PC-9 (cell line): ENCODE measurements at regions of chr7 and their contacts with region 1.

Region 1: DNA sequence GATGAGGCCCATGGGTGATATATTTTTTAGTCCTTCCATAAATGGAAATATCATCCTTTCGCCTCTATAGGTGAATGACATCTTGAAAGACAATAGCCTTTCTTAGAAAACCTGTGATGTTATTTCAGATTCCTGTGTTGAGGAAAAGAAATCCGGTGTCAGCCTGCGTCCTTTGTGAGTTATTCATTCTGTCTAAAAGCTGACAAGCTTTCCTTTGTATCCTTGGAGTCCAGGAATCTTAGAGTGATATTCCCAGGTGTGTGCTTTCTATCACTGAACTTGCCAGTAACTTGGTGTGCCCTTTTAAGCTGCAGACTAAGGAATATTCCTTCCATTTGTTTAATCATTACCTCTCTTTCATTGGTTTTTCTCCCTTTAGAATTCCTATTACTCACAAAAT is 41.0 kb downstream of the EVX1 start:
- DNase-seq: no peak
- H3K4me3 ChIP-seq: no peak overlapping the region
- H3K27ac ChIP-seq: no peak overlapping the region
- H3K4me1 ChIP-seq: no peaks in the 10 kb centered on the region
- H3K27me3 ChIP-seq: no peaks in the 10 kb centered on the region
- CTCF ChIP-seq: no peak

Region 2: GRCh38 chr7:27409776-27410175 is 126.2 kb after region 1 on chr7:
- CTCF ChIA-PET with region 1: interaction called, 17 read pairs
- POLR2A ChIA-PET with region 1: no interaction called
- intact Hi-C with region 1: no loop called
- DNase-seq: no peak
- H3K4me3 ChIP-seq: no peak overlapping the region
- H3K27ac ChIP-seq: no peak overlapping the region
- H3K4me1 ChIP-seq: no peaks in the 10 kb centered on the region
- H3K27me3 ChIP-seq: no peaks in the 10 kb centered on the region
- CTCF ChIP-seq: no peak